ENCODE measurements at regions of chr19 and their contacts with region 1.

Region 1: GRCh38 chr19:48513289-48514122 is 1.9 kb upstream of the LMTK3 start:
- DNase-seq: peak; percentile 92 to 94
- ATAC-seq: peak; percentile 76 to 86
- H3K4me3 ChIP-seq: peak overlapping the region; percentile 59
- H3K27ac ChIP-seq: peak overlapping the region; percentile 92 to 93
- H3K4me1 ChIP-seq: peaks cover 34% of the 10 kb centered on the region
- CTCF ChIP-seq: no peak
- EP300 ChIP-seq: no peak
- POLR2A ChIP-seq: peak; percentile 48
- RAD21 ChIP-seq: peak; percentile 2 to 45; a peak in 4 of 5 replicates

Region 2: GRCh38 chr19:48296963-48297734 is 216.4 kb before region 1 on chr19:
- CTCF ChIA-PET with region 1: no interaction called
- POLR2A ChIA-PET with region 1: no interaction called
- DNase-seq: no peak
- ATAC-seq: peak; percentile 28 to 33; a peak in 3 of 6 replicates
- H3K4me3 ChIP-seq: no peak overlapping the region
- H3K27ac ChIP-seq: no peak overlapping the region
- H3K4me1 ChIP-seq: no peaks in the 10 kb centered on the region
- CTCF ChIP-seq: no peak
- EP300 ChIP-seq: no peak
- POLR2A ChIP-seq: no peak
- RAD21 ChIP-seq: no peak

Region 3: GRCh38 chr19:48501496-48502350 is 11.8 kb before region 1 on chr19:
- CTCF ChIA-PET with region 1: interaction called, 52 read pairs
- POLR2A ChIA-PET with region 1: interaction called, 5 read pairs
- DNase-seq: peak; percentile 98 to 99
- ATAC-seq: peak; percentile 77 to 84
- H3K4me3 ChIP-seq: peak overlapping the region; percentile 45
- H3K27ac ChIP-seq: peak overlapping the region; percentile 72 to 85
- H3K4me1 ChIP-seq: peaks cover 20% of the 10 kb centered on the region
- CTCF ChIP-seq: no peak
- EP300 ChIP-seq: no peak
- POLR2A ChIP-seq: peak; percentile 17; the same call in 1 of the 2 replicates
- RAD21 ChIP-seq: no peak

Region 4: GRCh38 chr19:48543121-48544056 is 29.9 kb after region 1 on chr19:
- CTCF ChIA-PET with region 1: interaction called, 42 read pairs
- POLR2A ChIA-PET with region 1: interaction called, 5 read pairs
- DNase-seq: peak; percentile 69 to 78
- ATAC-seq: peak; percentile 72 to 79
- H3K4me3 ChIP-seq: no peak overlapping the region
- H3K27ac ChIP-seq: peak overlapping the region; percentile 62 to 85
- H3K4me1 ChIP-seq: peaks cover 41% of the 10 kb centered on the region
- CTCF ChIP-seq: no peak
- EP300 ChIP-seq: no peak
- POLR2A ChIP-seq: no peak
- RAD21 ChIP-seq: no peak

Region 5: DNA sequence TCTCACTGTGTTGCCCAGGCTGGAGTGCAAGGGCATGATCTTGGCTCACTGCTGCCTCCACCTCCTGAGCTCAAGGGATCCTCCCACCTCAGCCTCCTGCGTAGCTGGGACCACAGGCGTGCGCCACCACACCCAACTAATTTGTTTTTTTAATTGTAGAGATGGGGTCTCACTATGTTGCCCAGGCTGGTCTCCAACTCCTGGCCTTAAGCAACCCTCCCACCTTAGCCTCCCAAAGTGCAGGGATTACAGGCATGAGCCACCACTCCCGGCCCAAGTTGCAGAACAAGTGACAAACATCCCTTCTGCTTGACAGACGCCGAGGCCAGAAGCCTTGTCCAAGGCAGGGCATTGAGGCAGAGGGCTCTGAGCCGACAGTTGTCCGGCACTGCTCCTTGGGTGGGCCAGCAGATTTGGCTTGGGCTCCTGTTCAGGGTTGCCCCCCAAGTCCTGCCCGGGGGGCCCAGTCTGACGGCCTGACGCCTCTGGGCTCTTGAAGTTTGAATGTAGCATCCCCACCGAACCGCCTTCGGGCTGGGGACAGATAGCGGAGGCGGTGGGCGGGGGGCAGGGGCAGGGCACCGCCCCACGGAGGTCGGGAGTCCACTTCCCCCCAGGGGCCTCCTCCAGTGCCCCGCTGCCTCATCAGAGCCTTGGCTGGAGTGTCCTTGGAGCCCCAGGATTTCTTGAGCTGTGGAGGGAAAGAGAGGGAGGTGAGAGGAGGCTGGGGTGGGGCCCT is 87.3 kb after region 1 on chr19:
- CTCF ChIA-PET with region 1: interaction called, 90 read pairs
- POLR2A ChIA-PET with region 1: no interaction called
- DNase-seq: no peak
- ATAC-seq: no peak
- H3K4me3 ChIP-seq: no peak overlapping the region
- H3K27ac ChIP-seq: peak overlapping the region in 1 of 2 experiments; percentile 77; a peak in 1 of 6 replicates
- H3K4me1 ChIP-seq: peaks cover 14% of the 10 kb centered on the region
- CTCF ChIP-seq: no peak
- EP300 ChIP-seq: no peak
- POLR2A ChIP-seq: no peak
- RAD21 ChIP-seq: no peak

Region 6: DNA sequence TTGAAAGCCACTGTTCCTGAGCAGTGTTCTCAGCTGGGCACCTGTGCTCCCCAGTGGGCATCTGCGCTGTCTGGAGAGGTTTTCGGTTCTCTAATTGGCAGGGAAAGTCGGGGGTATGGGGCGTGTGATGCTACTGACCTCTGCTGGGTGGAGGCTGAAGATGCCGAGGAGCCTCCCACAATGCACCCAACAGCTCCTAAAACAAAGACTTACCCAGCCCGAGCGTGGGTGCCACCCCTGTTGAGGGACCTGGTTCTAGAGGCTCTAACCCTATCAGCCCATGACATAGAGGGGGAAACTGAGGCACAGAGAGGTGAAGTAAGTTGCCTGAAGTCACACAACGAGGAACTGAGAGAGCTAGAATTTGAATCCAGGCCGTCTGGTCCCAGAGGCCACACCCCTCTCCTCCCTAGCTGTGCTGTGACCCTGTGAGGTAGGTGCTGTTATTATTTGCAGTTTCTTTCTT is 95.3 kb after region 1 on chr19:
- CTCF ChIA-PET with region 1: interaction called, 90 read pairs
- POLR2A ChIA-PET with region 1: no interaction called
- DNase-seq: peak; percentile 83 to 88
- ATAC-seq: peak; percentile 75 to 82
- H3K4me3 ChIP-seq: no peak overlapping the region
- H3K27ac ChIP-seq: peak overlapping the region; percentile 65 to 78
- H3K4me1 ChIP-seq: peaks cover 5% of the 10 kb centered on the region; the same call in 1 of the 3 replicates
- CTCF ChIP-seq: peak; percentile 92
- EP300 ChIP-seq: no peak
- POLR2A ChIP-seq: no peak
- RAD21 ChIP-seq: peak; percentile 94 to 98